BJ (cell line): ENCODE measurements at regions of chr11 and their contacts with region 1.

Region 1: DNA sequence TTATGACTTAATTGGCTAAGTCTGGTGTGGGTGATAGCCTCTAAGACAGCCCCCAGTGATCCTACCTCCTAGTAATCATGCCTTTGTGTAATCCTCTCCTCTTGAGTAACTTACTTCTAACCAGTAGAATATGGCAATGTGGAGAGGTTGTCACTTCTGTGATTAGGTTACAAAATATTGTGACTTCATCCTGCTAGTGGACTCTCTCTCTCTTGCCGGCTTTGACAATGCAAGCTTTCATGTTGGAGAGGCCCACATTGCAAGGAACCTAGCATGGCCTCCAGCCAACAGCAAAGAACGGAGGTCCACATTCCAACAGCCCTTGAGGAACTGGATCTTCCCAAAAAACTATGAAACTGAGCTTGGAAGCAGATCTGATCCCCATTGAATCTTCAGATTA is 19.5 kb downstream of the YPEL4 start:
- DNase-seq: no peak
- H3K4me3 ChIP-seq: no peak overlapping the region
- H3K27me3 ChIP-seq: peaks cover 2% of the 10 kb centered on the region; the same call in 1 of the 2 replicates
- CTCF ChIP-seq: no peak

Region 2: GRCh38 chr11:57324886-57325734 is 305.1 kb before region 1 on chr11 and contains the start of gene TNKS1BP1:
- CTCF ChIA-PET with region 1: no interaction called
- POLR2A ChIA-PET with region 1: no interaction called
- DNase-seq: peak; percentile 88
- H3K4me3 ChIP-seq: peak within 1 kb of the TSS; percentile 82
- H3K27me3 ChIP-seq: no peaks in the 10 kb centered on the region
- CTCF ChIP-seq: no peak
- polyA plus RNA-seq, gene TNKS1BP1: 51.1 and 73.7 TPM in 2 replicates

Region 3: GRCh38 chr11:57604296-57605027 is 25.7 kb before region 1 on chr11:
- CTCF ChIA-PET with region 1: interaction called, 3 read pairs
- POLR2A ChIA-PET with region 1: interaction called, 26 read pairs
- DNase-seq: no peak
- H3K4me3 ChIP-seq: no peak overlapping the region
- H3K27me3 ChIP-seq: no peaks in the 10 kb centered on the region
- CTCF ChIP-seq: no peak